Natural killer cell (primary cell): ENCODE measurements at regions of chr1 and their contacts with region 1.

Region 1: GRCh38 chr1:30756545-30757195 is 904 bp downstream of the LAPTM5 start:
- DNase-seq: peak; percentile 72 to 87
- ATAC-seq: peak; percentile 66 to 87 (median 73)
- H3K4me3 ChIP-seq: peak overlapping the region; percentile 87
- H3K4me3 Mint-ChIP-seq: peak overlapping the region; percentile 99
- H3K27ac ChIP-seq: peak overlapping the region; percentile 95
- H3K27ac Mint-ChIP-seq: peak overlapping the region; percentile 99 to 100
- H3K4me1 ChIP-seq: peaks cover 88% of the 10 kb centered on the region
- H3K4me1 Mint-ChIP-seq: peaks cover 82 to 88% of the 10 kb centered on the region in 2 donors
- H3K27me3 ChIP-seq: no peaks in the 10 kb centered on the region
- H3K27me3 Mint-ChIP-seq: no peaks in the 10 kb centered on the region
- CTCF ChIP-seq: no peak

Region 2: DNA sequence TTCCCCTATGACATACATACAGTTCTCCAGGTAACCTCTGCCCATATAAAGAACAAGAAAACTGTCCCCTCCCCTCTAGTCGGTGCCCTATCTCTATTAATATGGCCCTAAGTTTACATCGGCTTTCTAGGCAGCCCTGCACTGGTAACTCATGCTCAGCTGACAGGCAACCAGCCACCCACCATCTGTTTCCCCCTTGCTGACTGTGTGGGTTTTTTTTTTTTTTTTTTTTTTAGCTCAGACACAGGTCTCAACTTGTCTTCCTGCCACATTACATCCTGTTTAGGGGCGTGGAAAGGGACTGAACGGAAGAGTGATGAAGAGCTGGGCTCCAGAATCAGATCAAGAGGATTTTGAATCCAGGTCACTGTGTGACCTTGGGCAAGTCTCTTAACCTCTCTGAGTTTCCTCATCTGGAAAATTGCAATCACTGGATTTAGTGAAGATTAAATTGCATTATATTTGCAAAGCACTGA is 13.0 kb before region 1 on chr1:
- intact Hi-C with region 1: loop called (anchors 1 kb)
- DNase-seq: peak; percentile 47 to 92
- ATAC-seq: peak; percentile 76 to 88 (median 84)
- H3K4me3 ChIP-seq: peak overlapping the region; percentile 7
- H3K4me3 Mint-ChIP-seq: peak overlapping the region; percentile 87
- H3K27ac ChIP-seq: peak overlapping the region; percentile 95
- H3K27ac Mint-ChIP-seq: peak overlapping the region; percentile 99 to 100
- H3K4me1 ChIP-seq: peaks cover 99% of the 10 kb centered on the region
- H3K4me1 Mint-ChIP-seq: peaks cover 80 to 99% of the 10 kb centered on the region in 2 donors
- H3K27me3 ChIP-seq: no peaks in the 10 kb centered on the region
- H3K27me3 Mint-ChIP-seq: no peaks in the 10 kb centered on the region
- CTCF ChIP-seq: no peak

Region 3: DNA sequence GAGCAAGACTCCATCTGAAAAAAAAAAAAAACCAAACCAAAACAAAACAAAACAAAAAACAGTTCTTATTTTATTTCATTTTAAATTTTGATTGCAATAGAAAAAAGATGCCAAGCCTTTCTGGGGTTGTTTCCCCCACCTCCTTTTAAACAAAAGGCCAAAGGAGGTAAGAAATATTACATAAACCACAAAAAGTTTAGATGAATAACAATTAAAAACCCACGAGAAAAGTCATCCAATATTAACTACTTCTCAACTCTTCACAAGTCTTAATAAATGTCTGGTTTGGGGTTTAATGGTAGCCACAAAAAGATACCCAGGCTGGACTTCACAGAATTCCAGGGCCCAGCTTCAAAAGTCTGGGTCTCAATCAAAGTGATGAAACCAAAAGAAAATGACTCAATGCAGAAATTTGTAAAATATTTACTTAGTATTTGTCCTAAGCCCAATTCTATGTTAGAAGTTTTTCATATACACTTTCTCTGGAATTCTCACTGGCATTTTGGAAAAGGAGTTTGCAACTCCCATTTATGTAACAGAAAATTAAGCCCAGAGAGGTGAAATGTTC is 198.9 kb after region 1 on chr1:
- intact Hi-C with region 1: no loop called
- DNase-seq: no peak
- ATAC-seq: no peak
- H3K4me3 ChIP-seq: no peak overlapping the region
- H3K4me3 Mint-ChIP-seq: no peak overlapping the region
- H3K27ac ChIP-seq: no peak overlapping the region
- H3K27ac Mint-ChIP-seq: no peak overlapping the region
- H3K4me1 ChIP-seq: no peaks in the 10 kb centered on the region
- H3K4me1 Mint-ChIP-seq: peaks cover 36 to 38% of the 10 kb centered on the region in 2 donors
- H3K27me3 ChIP-seq: no peaks in the 10 kb centered on the region
- H3K27me3 Mint-ChIP-seq: no peaks in the 10 kb centered on the region
- CTCF ChIP-seq: no peak

Region 4: DNA sequence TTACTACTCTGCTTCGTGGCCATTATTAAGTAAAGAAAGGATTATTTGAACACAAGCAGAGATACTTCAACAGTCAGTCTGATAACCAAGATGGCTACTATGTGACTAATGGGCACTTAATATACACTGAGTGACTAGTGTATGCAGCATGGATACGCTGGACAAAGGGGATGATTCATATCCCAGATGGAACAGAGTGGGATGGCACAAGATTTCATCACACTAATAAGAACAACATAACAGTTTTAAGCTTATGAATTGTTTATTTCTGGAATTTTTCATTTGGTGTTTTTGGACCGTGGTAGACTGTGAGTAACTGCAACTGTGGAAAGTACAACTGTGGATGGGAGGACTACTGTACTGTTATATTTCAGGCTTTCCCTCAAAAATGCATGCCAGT is 549.6 kb after region 1 on chr1:
- intact Hi-C with region 1: loop called (anchors 10 kb)
- DNase-seq: no peak
- ATAC-seq: no peak
- H3K4me3 ChIP-seq: no peak overlapping the region
- H3K4me3 Mint-ChIP-seq: no peak overlapping the region
- H3K27ac ChIP-seq: no peak overlapping the region
- H3K27ac Mint-ChIP-seq: no peak overlapping the region
- H3K4me1 ChIP-seq: no peaks in the 10 kb centered on the region
- H3K4me1 Mint-ChIP-seq: peaks cover 36 to 43% of the 10 kb centered on the region in 2 donors
- H3K27me3 ChIP-seq: no peaks in the 10 kb centered on the region
- H3K27me3 Mint-ChIP-seq: no peaks in the 10 kb centered on the region
- CTCF ChIP-seq: no peak